ENCODE measurements at regions of chr3 and their contacts with region 1.

Region 1: GRCh38 chr3:170414202-170414663 is 4.4 kb upstream of the CLDN11 start:
- DNase-seq: peak; percentile 85
- ATAC-seq: peak; percentile 39
- H3K4me3 ChIP-seq: peak overlapping the region; percentile 23; the same call in 1 of the 2 replicates
- H3K27ac ChIP-seq: no peak overlapping the region
- H3K4me1 ChIP-seq: peaks cover 15% of the 10 kb centered on the region
- H3K27me3 ChIP-seq: no peaks in the 10 kb centered on the region
- CTCF ChIP-seq: peak; percentile 98

Region 2: DNA sequence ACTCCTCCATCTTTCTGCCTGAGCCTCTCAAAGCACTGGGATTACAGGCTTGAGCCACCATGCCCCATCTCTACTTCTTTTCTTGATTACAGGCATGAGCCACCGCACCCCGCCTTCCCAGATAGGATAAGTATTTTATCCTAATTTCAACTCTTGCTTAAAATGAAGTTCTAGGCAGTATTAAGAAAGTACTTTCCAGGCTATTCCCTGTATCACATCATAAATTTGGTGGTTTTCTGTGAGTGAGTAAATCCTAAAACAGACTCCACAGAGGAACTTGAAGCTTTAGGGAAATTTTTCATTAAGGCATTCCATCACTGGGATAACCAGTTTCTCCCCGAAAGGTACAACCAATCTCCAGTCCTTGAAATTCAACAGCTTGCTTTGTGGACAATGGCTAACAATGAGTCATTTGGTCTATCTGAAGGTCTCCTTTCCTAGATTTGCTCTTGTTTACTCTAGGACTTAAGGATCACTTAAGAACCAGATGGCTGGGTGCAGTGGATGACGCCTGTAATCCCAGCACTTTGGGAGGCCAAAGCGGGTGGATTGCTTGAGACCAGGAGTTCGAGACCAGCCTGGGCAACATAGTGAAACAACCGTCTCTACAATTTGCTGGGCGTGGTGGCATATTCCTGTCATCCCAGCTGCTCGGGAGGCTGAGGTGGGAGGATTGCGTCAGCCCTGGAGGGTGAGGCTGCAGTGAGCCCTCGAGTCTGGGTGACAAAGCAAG is 106.4 kb before region 1 on chr3:
- CTCF ChIA-PET with region 1: interaction called, 5 read pairs
- POLR2A ChIA-PET with region 1: no interaction called
- intact Hi-C with region 1: loop called (anchors 1 kb)
- DNase-seq: peak; percentile 92
- ATAC-seq: peak; percentile 80
- H3K4me3 ChIP-seq: no peak overlapping the region
- H3K27ac ChIP-seq: peak overlapping the region; percentile 10; the same call in 1 of the 2 replicates
- H3K4me1 ChIP-seq: peaks cover 12% of the 10 kb centered on the region
- H3K27me3 ChIP-seq: no peaks in the 10 kb centered on the region
- CTCF ChIP-seq: no peak

Region 3: GRCh38 chr3:170397579-170398177 is 16.6 kb before region 1 on chr3:
- CTCF ChIA-PET with region 1: no interaction called
- POLR2A ChIA-PET with region 1: no interaction called
- intact Hi-C with region 1: no loop called
- DNase-seq: no peak
- ATAC-seq: no peak
- H3K4me3 ChIP-seq: no peak overlapping the region
- H3K27ac ChIP-seq: no peak overlapping the region
- H3K4me1 ChIP-seq: no peaks in the 10 kb centered on the region
- H3K27me3 ChIP-seq: no peaks in the 10 kb centered on the region
- CTCF ChIP-seq: no peak

Region 4: DNA sequence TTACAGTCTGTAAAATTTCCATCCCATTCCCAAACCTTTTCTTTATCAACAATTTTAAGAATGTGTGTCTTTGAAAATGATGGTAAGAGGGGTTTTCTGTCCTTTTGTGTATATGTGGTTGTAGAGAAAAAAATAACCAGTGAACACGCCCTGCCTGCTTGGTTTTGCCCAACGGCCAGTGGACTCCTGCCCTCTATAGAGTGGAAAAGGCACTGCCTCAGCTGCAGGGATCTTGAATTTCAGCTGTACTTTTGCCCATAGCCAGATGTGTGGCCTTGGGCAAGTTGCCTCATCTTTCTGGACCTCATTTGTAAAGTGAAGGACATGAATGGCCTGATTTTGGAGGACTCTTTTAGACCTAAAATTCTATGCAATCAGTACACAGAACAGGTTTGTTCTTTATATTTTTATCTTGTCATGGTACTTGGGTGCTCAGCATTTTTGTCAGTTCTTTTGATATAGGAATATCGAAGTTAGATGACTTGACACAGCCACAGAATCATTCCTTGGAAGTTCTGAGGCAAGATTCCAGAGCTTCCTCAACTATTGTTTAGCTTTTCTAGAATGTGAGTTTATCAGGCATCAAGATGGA is 85.4 kb after region 1 on chr3:
- CTCF ChIA-PET with region 1: interaction called, 3 read pairs
- POLR2A ChIA-PET with region 1: no interaction called
- intact Hi-C with region 1: loop called (anchors 1 kb)
- DNase-seq: peak; percentile 60
- ATAC-seq: peak; percentile 89
- H3K4me3 ChIP-seq: no peak overlapping the region
- H3K27ac ChIP-seq: no peak overlapping the region
- H3K4me1 ChIP-seq: no peaks in the 10 kb centered on the region
- H3K27me3 ChIP-seq: no peaks in the 10 kb centered on the region
- CTCF ChIP-seq: peak; percentile 76

Region 5: DNA sequence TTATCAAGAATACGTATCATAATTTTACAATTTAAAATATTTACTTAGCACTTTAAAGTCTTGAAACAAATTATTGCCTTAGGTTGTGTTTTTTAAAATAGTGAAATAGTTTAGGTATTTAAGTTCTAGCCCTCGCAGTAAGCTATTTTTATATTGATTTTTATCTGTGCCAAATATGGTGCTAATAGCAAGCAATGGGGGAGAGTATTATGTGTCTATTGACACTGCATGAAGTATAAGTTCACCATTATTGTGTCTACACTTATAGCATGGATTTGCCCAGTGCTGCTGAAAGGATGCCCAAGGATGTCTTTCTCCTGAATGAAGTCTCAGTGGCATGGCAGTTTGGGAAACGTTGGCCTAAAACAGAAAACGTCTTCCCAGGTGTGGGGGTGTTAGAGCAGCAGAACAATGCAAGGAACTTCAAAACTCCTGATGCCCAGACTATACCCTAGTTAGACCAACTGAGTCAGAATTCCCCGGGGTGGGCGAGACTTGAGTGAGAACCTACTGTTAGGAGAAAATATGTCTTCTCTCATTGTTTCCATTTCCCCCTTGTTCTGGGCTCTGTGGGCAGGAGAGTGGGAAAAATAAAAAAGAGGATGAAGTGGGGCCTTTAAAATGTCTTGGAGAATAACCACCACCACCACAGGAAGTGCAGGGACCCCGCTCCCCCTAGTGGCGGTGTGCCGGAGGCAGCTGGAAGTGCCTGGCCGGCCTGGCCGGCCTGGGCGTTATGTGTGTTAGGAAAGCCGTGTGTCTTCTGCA is 275.8 kb after region 1 on chr3:
- CTCF ChIA-PET with region 1: no interaction called
- POLR2A ChIA-PET with region 1: no interaction called
- intact Hi-C with region 1: loop called (anchors 10 kb)
- DNase-seq: peak; percentile 40
- ATAC-seq: peak; percentile 16; the same call in 1 of the 2 replicates
- H3K4me3 ChIP-seq: no peak overlapping the region
- H3K27ac ChIP-seq: no peak overlapping the region
- H3K4me1 ChIP-seq: peaks cover 30% of the 10 kb centered on the region
- H3K27me3 ChIP-seq: no peaks in the 10 kb centered on the region
- CTCF ChIP-seq: peak; percentile 64

Region 6: GRCh38 chr3:170848292-170848917 is 434.2 kb after region 1 on chr3:
- CTCF ChIA-PET with region 1: interaction called, 13 read pairs
- POLR2A ChIA-PET with region 1: no interaction called
- intact Hi-C with region 1: loop called (anchors 1 kb)
- DNase-seq: peak; percentile 75
- ATAC-seq: peak; percentile 63
- H3K4me3 ChIP-seq: no peak overlapping the region
- H3K27ac ChIP-seq: no peak overlapping the region
- H3K4me1 ChIP-seq: no peaks in the 10 kb centered on the region
- H3K27me3 ChIP-seq: no peaks in the 10 kb centered on the region
- CTCF ChIP-seq: peak; percentile 83